ENCODE measurements at regions of chr20 and their contacts with region 1.

Region 1: GRCh38 chr20:56554869-56555268 is 21.8 kb downstream of the FAM209B start:
- DNase-seq: peak; percentile 88
- H3K4me3 ChIP-seq: no peak overlapping the region
- H3K27me3 ChIP-seq: peaks cover 3% of the 10 kb centered on the region
- CTCF ChIP-seq: peak; percentile 28; the same call in 1 of the 2 replicates

Region 2: DNA sequence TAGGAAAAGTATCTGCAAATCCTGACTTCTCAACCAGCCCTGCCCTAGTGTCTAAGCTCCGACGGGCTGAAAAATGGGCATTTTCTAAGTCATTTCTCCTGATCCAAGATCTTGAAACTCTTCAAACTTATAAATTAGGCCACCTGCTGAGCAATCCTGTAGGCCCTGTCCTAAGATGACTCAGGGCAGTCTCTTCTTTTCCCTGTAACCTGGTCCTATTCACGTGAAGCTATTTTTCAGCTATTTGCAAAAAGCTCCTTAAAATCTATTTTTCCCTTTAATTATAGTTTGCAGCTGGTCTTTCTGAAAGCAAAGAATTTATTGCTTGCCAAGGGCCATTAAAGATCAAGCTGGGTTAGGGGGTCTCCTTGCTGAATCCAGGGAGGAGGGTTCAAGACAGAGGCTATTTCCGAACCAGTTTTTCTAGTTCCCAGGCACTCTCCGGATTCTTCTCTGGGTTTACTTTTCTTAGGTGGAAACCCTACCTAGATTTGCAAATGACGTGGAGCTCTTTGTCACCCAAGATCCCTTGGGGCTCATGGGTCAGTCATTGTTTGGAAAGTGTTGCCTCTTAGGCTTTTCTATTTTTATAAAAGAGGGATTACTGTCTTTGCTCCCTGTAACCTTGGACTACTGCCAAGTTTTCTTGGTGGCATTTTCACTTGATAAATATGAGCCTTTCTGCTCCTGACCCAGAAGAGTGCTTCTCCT is 11.6 kb after region 1 on chr20:
- CTCF ChIA-PET with region 1: interaction called, 13 read pairs
- POLR2A ChIA-PET with region 1: interaction called, 5 read pairs
- DNase-seq: no peak
- H3K4me3 ChIP-seq: no peak overlapping the region
- H3K27me3 ChIP-seq: no peaks in the 10 kb centered on the region
- CTCF ChIP-seq: no peak

Region 3: GRCh38 chr20:56582542-56582941 is 27.7 kb after region 1 on chr20:
- CTCF ChIA-PET with region 1: interaction called, 33 read pairs
- POLR2A ChIA-PET with region 1: no interaction called
- DNase-seq: no peak
- H3K4me3 ChIP-seq: no peak overlapping the region
- H3K27me3 ChIP-seq: peaks cover 3% of the 10 kb centered on the region
- CTCF ChIP-seq: no peak

Region 4: DNA sequence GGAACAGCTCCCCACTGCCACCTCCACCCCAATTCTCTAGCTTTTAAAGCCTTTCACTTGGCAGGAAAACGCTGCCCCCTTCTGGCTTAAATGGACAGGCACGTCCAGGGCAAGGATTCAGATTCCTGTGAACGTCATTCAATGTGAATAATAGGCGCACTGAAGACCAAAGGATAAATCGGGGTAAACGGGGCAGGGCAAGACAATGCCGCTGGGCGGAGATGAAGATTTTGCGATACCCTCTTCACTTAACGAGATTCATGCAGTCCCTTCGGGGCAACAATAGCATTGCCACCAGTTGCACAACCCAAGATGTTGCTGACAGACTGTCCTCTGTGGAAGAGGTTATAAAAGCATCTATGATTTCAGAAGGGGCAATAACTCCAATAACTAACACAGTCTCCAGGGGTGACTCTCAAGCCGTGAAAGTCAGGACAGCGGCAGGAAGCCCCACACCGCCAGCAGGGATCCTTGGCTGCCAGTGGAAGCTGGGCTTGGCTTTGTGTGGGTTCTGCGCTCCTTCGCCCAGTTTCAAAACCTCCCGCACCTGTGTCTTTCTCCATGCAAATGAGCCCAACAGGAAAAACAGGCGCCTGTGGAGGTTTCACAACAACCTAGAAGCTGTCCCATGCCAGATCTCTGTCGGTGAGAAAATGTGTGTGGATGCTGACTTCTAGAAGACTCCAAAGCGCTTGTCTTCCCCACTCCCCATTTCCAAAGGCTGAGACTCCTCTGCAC is 419.8 kb after region 1 on chr20:
- CTCF ChIA-PET with region 1: interaction called, 45 read pairs
- POLR2A ChIA-PET with region 1: no interaction called
- DNase-seq: peak; percentile 15
- H3K4me3 ChIP-seq: no peak overlapping the region
- H3K27me3 ChIP-seq: peaks cover 6% of the 10 kb centered on the region
- CTCF ChIP-seq: peak; percentile 83

Region 5: GRCh38 chr20:57048027-57048869 is 493.4 kb after region 1 on chr20:
- CTCF ChIA-PET with region 1: interaction called, 18 read pairs
- POLR2A ChIA-PET with region 1: no interaction called
- DNase-seq: no peak
- H3K4me3 ChIP-seq: no peak overlapping the region
- H3K27me3 ChIP-seq: no peaks in the 10 kb centered on the region
- CTCF ChIP-seq: peak; percentile 73

Region 6: DNA sequence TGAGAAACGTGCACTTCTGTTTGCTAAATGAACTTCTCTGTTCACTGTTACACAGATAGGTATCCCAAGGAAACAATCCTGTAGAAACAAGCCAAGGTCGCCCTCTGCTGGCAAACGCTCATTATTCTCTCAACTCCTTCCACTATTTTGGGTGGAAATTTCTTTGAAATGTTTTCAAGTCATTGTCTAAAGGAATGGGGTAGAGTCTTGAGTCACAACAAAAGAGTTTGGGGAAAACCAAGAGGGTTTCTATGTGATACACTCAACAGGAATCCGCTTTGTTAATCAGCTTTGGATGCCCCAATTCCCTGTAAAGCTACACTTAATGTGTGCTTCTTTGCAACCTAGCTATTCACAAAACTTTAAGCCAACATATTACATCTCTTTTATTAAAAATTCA is 791.6 kb after region 1 on chr20:
- CTCF ChIA-PET with region 1: interaction called, 12 read pairs
- POLR2A ChIA-PET with region 1: no interaction called
- DNase-seq: peak; percentile 52
- H3K4me3 ChIP-seq: no peak overlapping the region
- H3K27me3 ChIP-seq: no peaks in the 10 kb centered on the region; the same call in 1 of the 2 replicates
- CTCF ChIP-seq: peak; percentile 74